Activated T-helper 2 cell treated with anti-CD3 and anti-CD28 coated beads, Interferon-gamma antibody, Interleukin-2, Interleukin-4, amounts not matched to agents 10 μg/mL and 5 μg/mL and 100 μg/mL, durations not matched to agents 14 hours and 24 hours and 36 hours (primary cell): ENCODE measurements at regions of chr19 and their contacts with region 1.

Region 1: GRCh38 chr19:12796146-12797071 is 5.1 kb downstream of the JUNB start:
- DNase-seq: peak; percentile 73
- H3K4me3 Mint-ChIP-seq: peak overlapping the region; percentile 68
- H3K27ac Mint-ChIP-seq: peak overlapping the region; percentile 75
- H3K4me1 Mint-ChIP-seq: peaks cover 26% of the 10 kb centered on the region
- H3K27me3 Mint-ChIP-seq: no peaks in the 10 kb centered on the region

Region 2: GRCh38 chr19:12745166-12745897 is 51.1 kb before region 1 on chr19:
- intact Hi-C with region 1: no loop called
- DNase-seq: no peak
- H3K4me3 Mint-ChIP-seq: no peak overlapping the region
- H3K27ac Mint-ChIP-seq: no peak overlapping the region
- H3K4me1 Mint-ChIP-seq: peaks cover 3% of the 10 kb centered on the region
- H3K27me3 Mint-ChIP-seq: peaks cover 4% of the 10 kb centered on the region

Region 3: GRCh38 chr19:12759686-12760085 is 36.7 kb before region 1 on chr19:
- intact Hi-C with region 1: loop called (anchors 1 kb)
- DNase-seq: no peak
- H3K4me3 Mint-ChIP-seq: no peak overlapping the region
- H3K27ac Mint-ChIP-seq: peak overlapping the region; percentile 28
- H3K4me1 Mint-ChIP-seq: peaks cover 4% of the 10 kb centered on the region
- H3K27me3 Mint-ChIP-seq: peaks cover 2% of the 10 kb centered on the region

Region 4: GRCh38 chr19:12766051-12766521 is 30.3 kb before region 1 on chr19:
- intact Hi-C with region 1: loop called (anchors 1 kb)
- DNase-seq: peak; percentile 79
- H3K4me3 Mint-ChIP-seq: peak overlapping the region; percentile 26
- H3K27ac Mint-ChIP-seq: no peak overlapping the region
- H3K4me1 Mint-ChIP-seq: peaks cover 3% of the 10 kb centered on the region
- H3K27me3 Mint-ChIP-seq: no peaks in the 10 kb centered on the region

Region 5: DNA sequence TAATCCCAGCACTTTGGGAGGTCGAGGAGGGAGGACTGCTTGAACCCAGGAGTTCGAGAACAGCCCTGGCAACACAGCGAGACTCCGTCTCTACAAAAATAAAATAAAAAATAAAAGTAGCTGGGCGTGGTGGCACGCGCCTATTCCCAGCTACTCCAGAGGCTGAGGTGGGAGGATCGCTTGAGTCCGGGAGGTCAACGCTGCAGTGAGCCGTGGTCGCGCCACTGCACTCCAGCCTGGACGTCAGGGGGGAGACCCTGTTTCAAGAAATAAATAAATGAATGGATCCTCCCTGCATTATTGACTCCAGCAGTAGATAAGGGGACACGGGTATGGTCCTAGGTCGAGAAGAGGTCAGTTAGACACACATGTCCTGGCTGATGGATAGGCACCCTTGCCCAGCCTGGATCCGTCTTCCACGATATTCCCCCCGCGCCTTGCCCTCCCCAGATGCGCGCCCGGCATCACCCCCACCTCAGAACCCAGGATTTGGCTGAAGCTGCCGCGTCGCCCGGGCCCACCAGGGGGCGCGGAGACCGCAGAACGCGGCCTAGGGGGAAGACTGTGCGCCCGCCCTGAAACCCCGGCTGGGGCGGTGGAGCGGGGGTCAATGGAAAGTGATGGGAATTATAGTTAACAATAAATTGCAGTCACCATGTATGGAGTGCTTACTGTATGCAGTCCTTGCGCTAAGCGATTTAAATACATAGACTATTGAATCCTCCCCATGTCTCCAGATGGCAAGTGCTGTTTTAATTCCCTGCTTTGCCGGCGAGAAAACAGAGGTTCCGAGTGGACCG is 19.0 kb before region 1 on chr19:
- intact Hi-C with region 1: loop called (anchors 1 kb)
- DNase-seq: peak; percentile 79
- H3K4me3 Mint-ChIP-seq: peak overlapping the region; percentile 88
- H3K27ac Mint-ChIP-seq: peak overlapping the region; percentile 94
- H3K4me1 Mint-ChIP-seq: peaks cover 28% of the 10 kb centered on the region
- H3K27me3 Mint-ChIP-seq: no peaks in the 10 kb centered on the region

Region 6: DNA sequence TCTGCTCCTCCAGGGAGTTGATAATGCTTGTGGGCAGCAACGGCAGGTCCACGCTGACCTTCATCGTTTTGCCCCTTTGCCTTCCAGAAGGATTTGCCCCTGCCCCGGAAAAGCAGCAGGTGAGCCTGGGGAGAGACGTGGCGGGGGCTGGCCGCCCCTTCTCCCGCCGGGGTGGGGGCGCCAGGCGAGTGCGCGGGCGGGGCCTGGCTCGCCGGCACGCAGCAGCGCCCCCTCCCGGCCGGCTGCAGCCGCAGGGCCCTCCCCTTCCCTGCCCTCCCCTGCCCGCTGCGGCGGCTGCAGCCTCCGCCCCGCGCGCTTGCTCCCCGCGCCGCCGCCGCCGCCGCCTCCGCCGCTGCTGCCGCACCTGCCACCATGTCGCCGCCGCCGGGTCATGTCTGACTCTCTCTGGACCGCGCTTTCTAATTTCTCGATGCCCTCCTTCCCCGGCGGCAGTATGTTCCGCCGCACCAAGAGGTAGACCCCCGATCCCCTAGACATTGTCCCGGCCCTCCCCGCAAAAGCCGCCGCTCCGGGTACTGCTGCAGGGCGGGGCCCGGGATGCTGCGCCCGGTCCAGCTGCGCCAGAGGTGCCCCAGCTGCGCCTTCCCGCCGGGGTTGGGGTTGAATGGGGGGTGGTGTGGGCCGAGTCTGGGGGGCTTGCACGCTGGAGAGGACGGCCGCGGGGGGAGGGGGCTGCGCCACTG is 41.9 kb after region 1 on chr19 and contains the start of gene MAST1:
- intact Hi-C with region 1: no loop called
- DNase-seq: peak; percentile 51
- H3K4me3 Mint-ChIP-seq: peak within 1 kb of the TSS; percentile 72
- H3K27ac Mint-ChIP-seq: peak within 1 kb of the TSS; percentile 21
- H3K4me1 Mint-ChIP-seq: peaks cover 34% of the 10 kb centered on the region
- H3K27me3 Mint-ChIP-seq: peaks cover 60% of the 10 kb centered on the region
- total RNA-seq, gene MAST1: 5.2 and 6.5 TPM in 2 replicates

Region 7: GRCh38 chr19:13033819-13034611 is 237.6 kb after region 1 on chr19:
- intact Hi-C with region 1: no loop called
- DNase-seq: no peak
- H3K4me3 Mint-ChIP-seq: no peak overlapping the region
- H3K27ac Mint-ChIP-seq: no peak overlapping the region
- H3K4me1 Mint-ChIP-seq: peaks cover 4% of the 10 kb centered on the region
- H3K27me3 Mint-ChIP-seq: peaks cover 2% of the 10 kb centered on the region